Activated T-helper 2 cell treated with anti-CD3 and anti-CD28 coated beads, Interferon-gamma antibody, Interleukin-2, Interleukin-4, amounts not matched to agents 10 μg/mL and 5 μg/mL and 100 μg/mL, durations not matched to agents 14 hours and 24 hours and 36 hours (primary cell): ENCODE measurements at regions of chr22 and their contacts with region 1.

Region 1: GRCh38 chr22:21876486-21877176 is 9.2 kb upstream of the MAPK1 start:
- DNase-seq: peak; percentile 14
- H3K4me3 Mint-ChIP-seq: peak overlapping the region; percentile 28
- H3K27ac Mint-ChIP-seq: peak overlapping the region; percentile 87
- H3K4me1 Mint-ChIP-seq: peaks cover 18% of the 10 kb centered on the region
- H3K27me3 Mint-ChIP-seq: peaks cover 6% of the 10 kb centered on the region

Region 2: GRCh38 chr22:20456064-20456721 is 1420.4 kb before region 1 on chr22:
- intact Hi-C with region 1: no loop called
- DNase-seq: peak; percentile 68
- H3K4me3 Mint-ChIP-seq: no peak overlapping the region
- H3K27ac Mint-ChIP-seq: peak overlapping the region; percentile 51
- H3K4me1 Mint-ChIP-seq: peaks cover 18% of the 10 kb centered on the region
- H3K27me3 Mint-ChIP-seq: no peaks in the 10 kb centered on the region

Region 3: DNA sequence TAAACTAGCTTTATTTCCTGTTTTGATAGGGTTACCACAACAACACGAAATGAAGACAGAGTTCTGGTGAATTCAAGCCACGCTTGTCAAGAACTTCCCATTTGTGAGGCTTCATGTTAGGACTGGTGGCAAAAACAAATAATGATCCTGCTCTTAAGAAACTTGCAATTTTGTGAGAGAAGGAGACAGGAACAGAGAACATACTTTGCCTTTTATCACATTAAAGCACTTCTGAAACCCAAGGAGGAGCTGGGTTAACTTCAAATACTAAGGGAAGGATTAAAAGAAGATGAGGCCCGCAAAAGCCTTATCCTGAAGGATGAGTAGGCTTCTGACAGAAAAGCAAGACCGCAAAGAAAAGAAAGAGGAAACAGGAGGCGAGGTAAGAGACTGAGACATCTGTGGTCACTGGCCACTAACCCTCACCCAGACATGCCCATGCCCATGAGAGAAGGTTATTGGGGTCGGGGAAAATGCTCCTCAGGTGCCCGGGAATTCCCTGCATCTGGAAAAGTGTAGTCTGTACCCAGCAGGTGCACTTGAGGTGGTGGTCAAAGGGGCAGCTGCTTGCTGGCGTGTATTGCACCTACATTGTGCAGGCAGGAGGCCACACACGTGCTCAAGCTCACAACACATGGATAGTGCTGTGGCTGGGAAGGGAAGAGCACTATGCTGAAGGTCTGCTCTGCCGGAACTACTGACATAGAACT is 59.7 kb before region 1 on chr22:
- intact Hi-C with region 1: loop called (anchors 1 kb)
- DNase-seq: peak; percentile 24
- H3K4me3 Mint-ChIP-seq: peak overlapping the region; percentile 68
- H3K27ac Mint-ChIP-seq: peak overlapping the region; percentile 88
- H3K4me1 Mint-ChIP-seq: peaks cover 54% of the 10 kb centered on the region
- H3K27me3 Mint-ChIP-seq: no peaks in the 10 kb centered on the region

Region 4: DNA sequence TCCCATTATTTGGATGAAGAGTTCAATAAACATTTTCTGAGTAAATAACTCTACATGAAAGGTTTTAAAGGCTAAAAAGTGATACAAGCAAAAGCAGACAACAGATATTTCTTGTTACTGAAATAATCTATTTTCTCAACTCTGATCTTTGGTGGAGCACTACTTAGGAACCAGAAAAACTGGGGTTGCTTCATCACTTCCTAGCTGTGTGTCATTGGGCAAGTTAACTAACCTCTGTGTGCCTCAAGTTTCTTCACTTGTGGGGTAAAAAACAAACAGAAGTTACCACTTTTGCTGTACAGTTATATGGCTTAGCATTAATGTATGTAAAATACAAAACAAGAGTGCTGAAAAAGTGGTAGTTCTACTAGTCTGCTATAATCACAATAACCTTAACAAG is 14.8 kb before region 1 on chr22:
- intact Hi-C with region 1: loop called (anchors 2 kb)
- DNase-seq: no peak
- H3K4me3 Mint-ChIP-seq: no peak overlapping the region
- H3K27ac Mint-ChIP-seq: no peak overlapping the region
- H3K4me1 Mint-ChIP-seq: peaks cover 62% of the 10 kb centered on the region
- H3K27me3 Mint-ChIP-seq: no peaks in the 10 kb centered on the region